Mammary epithelial cell (primary cell): ENCODE measurements at regions of chr17 and their contacts with region 1.

Region 1: GRCh38 chr17:38674749-38675615 is at the start of gene EPOP:
- DNase-seq: peak; percentile 78
- H3K4me3 ChIP-seq: peak within 1 kb of the TSS; percentile 49 to 62 (median 53)
- H3K27ac ChIP-seq: peak within 1 kb of the TSS; percentile 19
- H3K4me1 ChIP-seq: peaks cover 17% of the 10 kb centered on the region
- H3K27me3 ChIP-seq: peaks cover 5% of the 10 kb centered on the region
- CTCF ChIP-seq: no peak
- total RNA-seq, gene EPOP: 2.8 to 3.2 TPM

Region 2: GRCh38 chr17:38444151-38444550 is 230.8 kb before region 1 on chr17:
- CTCF ChIA-PET with region 1: no interaction called
- dilution Hi-C with region 1: no loop called
- in situ Hi-C with region 1: loop called in 1 of 2 experiments (anchors 25 kb)
- intact Hi-C with region 1: no loop called
- DNase-seq: peak; percentile 54
- H3K4me3 ChIP-seq: no peak overlapping the region
- H3K27ac ChIP-seq: no peak overlapping the region
- H3K4me1 ChIP-seq: peaks cover 20% of the 10 kb centered on the region
- H3K27me3 ChIP-seq: no peaks in the 10 kb centered on the region
- CTCF ChIP-seq: peak; percentile 88 to 97

Region 3: GRCh38 chr17:38498186-38498752 is 176.7 kb before region 1 on chr17:
- CTCF ChIA-PET with region 1: no interaction called
- dilution Hi-C with region 1: loop called (anchors 10 kb)
- in situ Hi-C with region 1: no loop called
- intact Hi-C with region 1: no loop called
- DNase-seq: no peak
- H3K4me3 ChIP-seq: no peak overlapping the region
- H3K27ac ChIP-seq: no peak overlapping the region
- H3K4me1 ChIP-seq: no peaks in the 10 kb centered on the region
- H3K27me3 ChIP-seq: no peaks in the 10 kb centered on the region
- CTCF ChIP-seq: no peak

Region 4: DNA sequence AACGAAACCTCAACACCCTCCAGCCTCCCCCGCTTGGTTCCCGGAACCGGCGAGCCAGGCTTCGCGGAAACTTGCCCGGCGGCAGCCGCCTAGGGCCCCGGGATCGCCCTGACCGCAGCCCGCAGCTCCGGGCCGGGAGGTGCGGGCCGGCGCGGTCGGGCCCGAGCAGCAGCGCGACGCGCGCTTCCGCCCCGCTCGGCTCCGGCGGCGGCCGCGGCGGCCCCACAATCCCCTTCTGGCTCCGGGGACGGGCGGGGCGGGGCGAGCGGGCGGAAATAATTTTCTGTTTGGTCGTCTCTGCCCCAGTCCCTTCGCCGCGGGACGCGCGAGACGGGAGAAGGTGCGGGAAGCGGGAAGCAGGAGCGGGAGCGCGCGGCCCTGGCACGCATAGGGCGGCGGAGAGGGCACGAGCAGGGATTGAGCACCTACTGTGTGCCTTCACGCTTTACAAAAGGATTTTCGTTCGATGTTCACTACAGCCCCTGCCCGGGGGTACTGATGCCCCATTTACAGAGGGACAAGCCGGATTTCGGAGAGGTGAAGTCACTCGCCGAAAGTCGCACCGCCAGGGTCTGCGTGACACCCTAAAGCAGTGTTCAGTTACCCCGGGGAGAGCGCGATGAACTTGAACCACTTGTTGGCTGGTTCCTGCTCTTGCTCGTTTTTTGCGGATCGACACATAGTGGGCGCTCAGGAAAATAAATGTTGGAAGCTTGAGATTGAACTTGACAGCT is 27.4 kb after region 1 on chr17:
- CTCF ChIA-PET with region 1: no interaction called
- dilution Hi-C with region 1: no loop called
- in situ Hi-C with region 1: no loop called
- intact Hi-C with region 1: loop called (anchors 2 kb)
- DNase-seq: peak; percentile 88
- H3K4me3 ChIP-seq: peak overlapping the region; percentile 62 to 76 (median 71)
- H3K27ac ChIP-seq: peak overlapping the region; percentile 62
- H3K4me1 ChIP-seq: peaks cover 29% of the 10 kb centered on the region
- H3K27me3 ChIP-seq: no peaks in the 10 kb centered on the region
- CTCF ChIP-seq: no peak

Region 5: GRCh38 chr17:38729886-38730525 is 55.0 kb after region 1 on chr17 and contains the start of gene CISD3:
- CTCF ChIA-PET with region 1: no interaction called
- dilution Hi-C with region 1: no loop called
- in situ Hi-C with region 1: no loop called
- intact Hi-C with region 1: loop called (anchors 1 kb)
- DNase-seq: peak; percentile 74
- H3K4me3 ChIP-seq: peak within 1 kb of the TSS; percentile 65 to 79 (median 68)
- H3K27ac ChIP-seq: peak within 1 kb of the TSS; percentile 41
- H3K4me1 ChIP-seq: peaks cover 12% of the 10 kb centered on the region
- H3K27me3 ChIP-seq: no peaks in the 10 kb centered on the region
- CTCF ChIP-seq: peak; percentile 40 to 44
- total RNA-seq, gene CISD3: 3.3 to 30.4 TPM

Region 6: DNA sequence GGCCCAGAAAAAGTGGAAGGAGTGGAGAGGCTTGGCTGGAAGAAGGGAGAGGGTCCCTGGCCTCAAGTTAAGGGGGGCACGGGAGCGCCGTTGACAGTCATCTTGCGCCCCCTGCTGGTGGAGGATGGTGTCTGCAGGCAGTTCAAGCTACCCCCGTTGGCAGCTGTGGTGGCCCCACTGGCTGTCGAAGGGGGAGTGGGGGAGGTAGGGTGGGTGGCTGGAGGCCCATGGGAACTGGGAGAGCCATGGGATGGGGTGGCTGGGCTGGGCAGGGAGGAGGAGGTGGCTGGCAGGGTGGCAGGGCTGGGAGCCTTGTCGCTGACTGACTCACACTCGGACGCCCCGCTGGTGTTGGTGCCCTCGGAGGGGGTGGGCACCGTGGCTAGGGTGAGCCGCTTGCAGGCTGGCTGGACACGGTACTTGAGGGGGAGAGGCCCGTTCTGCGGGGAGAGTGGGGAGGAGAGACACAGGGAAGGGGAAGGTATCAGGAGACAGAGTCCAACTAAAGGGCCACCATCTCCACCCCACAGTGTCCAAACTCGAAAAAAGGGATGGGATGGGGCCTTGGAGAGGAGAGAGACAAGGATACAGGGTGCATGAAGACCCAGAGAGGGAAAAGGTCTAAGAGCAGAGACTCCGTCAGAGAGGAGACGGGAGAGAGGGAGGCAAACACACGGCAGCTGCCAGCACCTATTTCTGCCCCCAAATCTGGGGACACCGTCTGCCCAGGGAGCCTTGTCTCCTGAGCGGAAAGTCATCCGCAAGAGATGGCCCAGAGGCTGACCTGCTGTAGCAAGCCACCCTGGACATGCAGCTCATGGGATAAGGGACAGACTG is 60.4 kb after region 1 on chr17:
- CTCF ChIA-PET with region 1: no interaction called
- dilution Hi-C with region 1: no loop called
- in situ Hi-C with region 1: no loop called
- intact Hi-C with region 1: loop called (anchors 1 kb)
- DNase-seq: no peak
- H3K4me3 ChIP-seq: no peak overlapping the region
- H3K27ac ChIP-seq: no peak overlapping the region
- H3K4me1 ChIP-seq: peaks cover 8% of the 10 kb centered on the region
- H3K27me3 ChIP-seq: no peaks in the 10 kb centered on the region
- CTCF ChIP-seq: peak; percentile 68 to 92

Region 7: DNA sequence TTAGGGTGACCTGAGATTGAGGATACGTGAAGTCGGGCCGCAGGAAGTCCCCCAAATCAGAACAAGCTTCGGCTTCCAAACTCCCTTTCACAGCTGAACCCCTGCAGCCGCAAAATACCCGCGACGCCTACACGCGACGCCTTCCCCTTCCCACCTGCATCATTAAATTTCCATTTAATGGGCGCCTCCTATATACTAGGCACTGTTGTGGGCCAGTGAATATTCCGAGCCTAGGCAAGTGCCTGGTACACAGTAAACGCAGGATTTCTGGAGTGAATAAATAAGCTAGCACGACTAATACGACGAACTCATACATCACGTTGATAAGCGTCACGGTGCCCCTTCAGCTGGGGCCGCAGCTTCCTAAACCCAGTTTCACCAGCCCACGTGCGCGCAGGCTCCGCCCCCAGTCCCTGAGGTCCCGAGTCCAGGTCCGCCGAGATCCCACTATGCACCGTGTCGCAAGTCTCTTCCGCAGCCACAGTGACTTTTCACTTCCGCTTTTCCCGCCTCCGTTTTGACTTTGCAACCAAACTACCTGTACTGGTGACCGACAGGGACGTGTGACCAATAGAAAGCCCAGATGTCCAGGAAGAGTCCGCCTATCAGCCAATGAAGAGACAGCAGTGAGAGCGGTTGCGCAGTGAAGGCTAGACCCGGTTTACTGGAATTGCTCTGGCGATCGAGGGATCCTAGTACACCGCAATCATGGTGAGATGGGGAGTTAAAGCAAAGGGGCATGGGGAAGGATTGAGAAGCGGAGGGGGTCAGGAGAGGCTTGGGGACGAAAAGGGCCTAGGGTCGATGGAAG is 77.3 kb after region 1 on chr17 and contains the start of gene PSMB3:
- CTCF ChIA-PET with region 1: no interaction called
- dilution Hi-C with region 1: no loop called
- in situ Hi-C with region 1: no loop called
- intact Hi-C with region 1: loop called (anchors 1 kb)
- DNase-seq: peak; percentile 99
- H3K4me3 ChIP-seq: peak within 1 kb of the TSS; percentile 81 to 96 (median 94)
- H3K27ac ChIP-seq: peak within 1 kb of the TSS; percentile 78
- H3K4me1 ChIP-seq: peaks cover 33% of the 10 kb centered on the region
- H3K27me3 ChIP-seq: no peaks in the 10 kb centered on the region
- CTCF ChIP-seq: no peak
- total RNA-seq, gene PSMB3: 150 to 218 TPM